ENCODE measurements at regions of chr16 and their contacts with region 1.

Region 1: GRCh38 chr16:84726079-84726668 is 26.4 kb downstream of the USP10 start:
- DNase-seq: peak; percentile 89 to 90
- ATAC-seq: peak; percentile 67 to 89 (median 84)
- H3K4me3 ChIP-seq: peak overlapping the region in 4 of 10 donors; percentile 5 to 38 (median 18)
- H3K27ac ChIP-seq: peak overlapping the region in 4 of 10 donors; percentile 17 to 65 (median 46)
- H3K4me1 ChIP-seq: peaks cover 0 to 79% (median 66%) of the 10 kb centered on the region in 9 donors
- H3K27me3 ChIP-seq: no peaks in the 10 kb centered on the region
- CTCF ChIP-seq: peak; percentile 80 to 97 (median 95)

Region 2: DNA sequence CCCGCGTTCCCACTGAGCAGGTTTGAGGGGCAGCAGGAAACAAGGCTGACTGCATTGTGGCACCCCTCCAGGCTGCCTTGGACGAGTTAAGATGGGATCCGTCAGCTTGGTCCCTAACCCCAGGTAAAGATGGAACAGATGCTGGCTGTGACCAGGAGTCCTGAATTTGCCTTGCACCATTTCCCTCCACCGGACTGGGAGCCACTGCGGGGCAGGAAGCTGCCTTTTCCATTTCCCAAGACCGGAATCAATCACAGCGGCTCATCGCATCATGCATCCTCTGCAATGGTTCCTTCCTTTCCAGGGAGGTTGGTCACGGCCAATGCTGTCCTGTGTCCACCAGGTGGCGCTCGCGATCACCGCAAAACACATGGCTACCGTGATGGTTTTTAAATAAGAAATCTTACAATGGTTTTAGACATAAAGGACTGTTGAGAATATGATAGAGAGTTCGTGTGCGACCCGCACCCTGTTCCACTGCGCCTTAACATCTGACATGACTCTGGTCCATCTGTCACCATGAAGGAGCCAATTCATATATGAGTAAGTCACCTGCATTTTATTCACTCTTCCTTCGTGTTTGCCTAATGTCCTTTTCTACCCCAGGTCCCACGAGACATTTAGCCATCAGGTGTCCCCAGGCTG is 214.9 kb before region 1 on chr16:
- intact Hi-C with region 1: loop called in 8 of 10 experiments (anchors 5 kb)
- DNase-seq: peak; percentile 83 to 85
- ATAC-seq: peak; percentile 40 to 92 (median 84)
- H3K4me3 ChIP-seq: peak overlapping the region in 2 of 10 donors; percentile 10 to 14
- H3K27ac ChIP-seq: peak overlapping the region in 1 of 10 donors; percentile 87
- H3K4me1 ChIP-seq: peaks cover 0 to 46% (median 3%) of the 10 kb centered on the region in 9 donors
- H3K27me3 ChIP-seq: no peaks in the 10 kb centered on the region
- CTCF ChIP-seq: peak; percentile 94 to 99 (median 97)

Region 3: DNA sequence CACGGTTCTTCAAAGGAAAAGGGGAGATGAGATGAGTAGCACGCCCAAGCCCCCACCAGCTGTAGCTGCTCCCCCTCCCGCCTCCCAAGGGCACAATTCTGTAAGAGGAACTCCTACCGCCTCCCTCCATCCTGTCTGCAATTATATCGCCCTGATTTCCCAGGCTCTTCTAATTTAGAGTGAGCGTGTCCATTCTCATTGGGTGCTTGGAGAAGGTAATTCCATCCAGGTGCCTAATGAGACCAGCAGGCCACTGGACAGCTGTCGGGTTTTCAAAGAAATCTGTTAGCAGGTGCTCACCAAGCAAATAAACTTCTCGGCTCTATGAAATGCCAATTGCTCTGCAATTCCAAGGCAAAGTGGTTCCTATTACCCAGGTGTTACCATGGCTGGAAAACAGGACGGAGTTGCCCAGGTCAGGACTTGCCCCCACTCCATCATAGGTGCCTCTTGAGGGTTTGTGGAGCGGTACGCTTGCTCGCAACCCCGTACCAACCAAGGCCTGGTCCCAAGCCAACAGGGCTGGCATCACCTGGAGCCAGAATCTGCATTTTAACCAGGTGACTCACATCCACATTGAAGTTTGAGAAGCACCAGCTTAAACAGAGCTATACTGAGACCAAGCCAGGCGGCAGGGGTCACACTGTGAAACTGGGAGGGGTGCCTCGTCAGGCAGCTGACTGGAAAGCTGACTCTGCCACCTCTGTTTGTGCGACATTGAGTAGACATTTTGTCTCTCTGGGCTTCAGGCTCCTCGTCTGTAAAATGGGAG is 205.3 kb before region 1 on chr16:
- intact Hi-C with region 1: loop called in 1 of 10 experiments (anchors 5 kb)
- DNase-seq: no peak
- ATAC-seq: no peak
- H3K4me3 ChIP-seq: no peak overlapping the region
- H3K27ac ChIP-seq: no peak overlapping the region
- H3K4me1 ChIP-seq: peaks cover 0 to 18% (median 0%) of the 10 kb centered on the region in 9 donors
- H3K27me3 ChIP-seq: no peaks in the 10 kb centered on the region
- CTCF ChIP-seq: no peak

Region 4: DNA sequence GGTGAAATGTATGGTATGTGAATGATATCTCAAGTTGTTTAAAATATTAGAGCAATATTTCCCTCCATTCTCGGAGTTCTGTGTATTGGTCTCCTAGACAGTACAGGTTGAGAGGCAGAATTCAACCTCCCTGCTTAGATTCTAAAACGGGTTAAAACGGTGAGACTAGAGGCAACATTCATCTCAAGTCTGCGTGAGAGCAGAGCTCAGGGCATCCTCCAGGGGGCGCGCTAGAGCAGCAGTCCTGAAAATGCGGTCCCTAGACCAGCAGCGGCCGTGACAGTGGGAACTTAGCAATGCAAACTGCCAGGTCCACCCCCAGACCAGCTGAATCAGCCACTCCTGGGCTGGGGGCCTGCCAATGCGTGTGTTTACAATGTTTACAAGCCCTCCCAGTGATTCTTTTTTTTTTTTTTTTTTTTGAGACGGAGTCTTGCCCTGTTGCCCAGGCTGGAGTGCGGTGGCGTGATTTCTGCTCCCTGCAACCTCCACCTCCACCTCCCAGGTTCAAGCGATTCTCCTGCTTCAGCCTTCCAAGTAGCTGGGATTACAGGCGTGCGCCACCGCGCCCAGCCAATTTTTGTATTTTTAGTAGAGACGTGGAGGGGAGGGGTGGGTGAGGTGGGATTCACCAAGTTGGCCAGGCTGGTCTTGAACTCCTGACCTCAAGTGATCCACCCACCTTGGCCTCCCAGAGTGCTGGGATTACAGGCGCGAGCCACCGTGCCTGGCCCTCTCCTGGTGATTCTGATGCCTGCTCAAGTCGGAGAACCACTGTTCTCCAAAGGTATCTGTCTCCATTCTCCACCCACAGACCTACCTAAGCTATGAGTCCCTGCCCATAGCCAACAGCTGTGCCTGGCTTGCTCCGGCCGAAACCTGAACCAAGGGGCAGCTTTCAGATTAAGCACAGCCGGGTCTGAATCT is 53.6 kb before region 1 on chr16:
- intact Hi-C with region 1: loop called (anchors 1 to 5 kb)
- DNase-seq: peak; percentile 67 to 84
- ATAC-seq: peak; percentile 46 to 93 (median 87)
- H3K4me3 ChIP-seq: no peak overlapping the region
- H3K27ac ChIP-seq: no peak overlapping the region
- H3K4me1 ChIP-seq: peaks cover 0 to 7% (median 0%) of the 10 kb centered on the region in 9 donors
- H3K27me3 ChIP-seq: peaks cover 0 to 5% (median 0%) of the 10 kb centered on the region in 7 donors
- CTCF ChIP-seq: peak; percentile 88 to 94 (median 93)

Region 5: GRCh38 chr16:84738255-84739038 is 12.3 kb after region 1 on chr16:
- intact Hi-C with region 1: no loop called
- DNase-seq: peak; percentile 58 to 82
- ATAC-seq: peak; percentile 58 to 80 (median 68)
- H3K4me3 ChIP-seq: no peak overlapping the region
- H3K27ac ChIP-seq: peak overlapping the region in 3 of 10 donors; percentile 4 to 77 (median 12)
- H3K4me1 ChIP-seq: peaks cover 5 to 74% (median 68%) of the 10 kb centered on the region in 9 donors
- H3K27me3 ChIP-seq: no peaks in the 10 kb centered on the region
- CTCF ChIP-seq: peak; percentile 78 to 94 (median 89)